ENCODE measurements at regions of chr3 and their contacts with region 1.

Region 1: DNA sequence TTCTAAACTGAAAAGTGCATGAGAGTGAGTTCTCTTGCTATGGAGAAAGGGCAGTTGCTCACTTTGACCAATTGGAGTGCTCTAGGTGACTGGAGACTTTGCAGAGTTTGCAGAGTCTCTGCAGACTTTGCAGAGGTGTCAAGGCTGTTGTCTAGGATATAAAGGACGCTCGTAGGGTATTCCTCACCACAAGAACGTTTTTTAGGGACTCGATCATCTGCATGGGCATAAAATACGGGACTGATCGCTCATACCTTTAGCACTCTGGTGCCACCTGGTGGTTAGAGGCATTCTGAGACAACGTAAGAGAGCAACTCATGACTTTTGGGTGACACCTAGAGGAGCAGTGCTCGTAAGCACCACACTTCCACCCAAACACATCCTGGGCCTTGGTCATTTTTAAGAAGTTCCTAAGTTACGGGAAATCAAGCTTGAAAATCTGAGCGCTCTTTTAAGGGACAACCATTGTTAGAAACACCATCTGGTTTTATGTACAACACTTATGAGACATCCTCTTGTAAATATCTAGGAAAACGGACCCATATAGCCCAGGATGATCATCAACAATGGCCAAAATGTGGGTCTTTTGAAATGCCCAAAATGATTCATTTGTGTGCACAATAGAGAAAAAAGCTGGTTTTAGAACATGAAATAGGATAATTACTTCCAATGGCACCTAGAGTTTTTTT is 51.6 kb upstream of the XCR1 start:
- DNase-seq: peak; percentile 90
- H3K4me3 ChIP-seq: no peak overlapping the region
- H3K27ac ChIP-seq: no peak overlapping the region
- H3K27me3 ChIP-seq: peaks cover 4% of the 10 kb centered on the region
- CTCF ChIP-seq: peak; percentile 100

Region 2: GRCh38 chr3:45923755-45924154 is 155.1 kb before region 1 on chr3:
- CTCF ChIA-PET with region 1: interaction called, 21 read pairs
- POLR2A ChIA-PET with region 1: no interaction called
- DNase-seq: no peak
- H3K4me3 ChIP-seq: no peak overlapping the region
- H3K27ac ChIP-seq: no peak overlapping the region
- H3K27me3 ChIP-seq: no peaks in the 10 kb centered on the region
- CTCF ChIP-seq: no peak

Region 3: DNA sequence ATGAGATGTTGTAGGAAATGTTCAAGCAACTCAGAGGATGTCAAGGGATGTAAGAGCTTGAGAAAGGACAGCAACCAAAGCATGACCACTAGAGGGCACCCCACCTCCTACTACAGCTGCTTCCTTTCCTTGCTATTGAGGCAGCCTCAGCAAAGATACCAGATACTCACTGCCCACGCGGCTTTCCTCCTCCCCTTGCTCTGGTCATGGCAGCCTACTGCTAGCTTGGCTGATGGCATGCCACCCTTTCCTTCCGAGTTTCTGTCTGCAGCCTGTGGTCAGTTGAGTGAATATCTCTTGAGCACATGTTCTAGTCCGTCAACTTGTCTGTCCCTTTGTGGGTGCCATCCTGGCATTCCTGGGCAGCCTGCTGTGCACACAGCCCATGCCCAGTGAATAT is 140.0 kb before region 1 on chr3:
- CTCF ChIA-PET with region 1: interaction called, 420 read pairs
- POLR2A ChIA-PET with region 1: no interaction called
- DNase-seq: peak; percentile 84
- H3K4me3 ChIP-seq: no peak overlapping the region
- H3K27ac ChIP-seq: no peak overlapping the region
- H3K27me3 ChIP-seq: no peaks in the 10 kb centered on the region
- CTCF ChIP-seq: peak; percentile 93

Region 4: GRCh38 chr3:45968706-45969105 is 110.2 kb before region 1 on chr3:
- CTCF ChIA-PET with region 1: interaction called, 41 read pairs
- POLR2A ChIA-PET with region 1: no interaction called
- DNase-seq: no peak
- H3K4me3 ChIP-seq: no peak overlapping the region
- H3K27ac ChIP-seq: no peak overlapping the region
- H3K27me3 ChIP-seq: no peaks in the 10 kb centered on the region
- CTCF ChIP-seq: no peak

Region 5: GRCh38 chr3:46065294-46065721 is 13.5 kb before region 1 on chr3:
- CTCF ChIA-PET with region 1: interaction called, 56 read pairs
- POLR2A ChIA-PET with region 1: no interaction called
- DNase-seq: no peak
- H3K4me3 ChIP-seq: no peak overlapping the region
- H3K27ac ChIP-seq: no peak overlapping the region
- H3K27me3 ChIP-seq: peaks cover 35% of the 10 kb centered on the region
- CTCF ChIP-seq: no peak

Region 6: GRCh38 chr3:46378426-46378942 is 299.6 kb after region 1 on chr3:
- CTCF ChIA-PET with region 1: interaction called, 27 read pairs
- POLR2A ChIA-PET with region 1: no interaction called
- DNase-seq: peak; percentile 13
- H3K4me3 ChIP-seq: no peak overlapping the region
- H3K27ac ChIP-seq: no peak overlapping the region
- H3K27me3 ChIP-seq: peaks cover 13% of the 10 kb centered on the region
- CTCF ChIP-seq: peak; percentile 71